Natural killer cell (primary cell): ENCODE measurements at regions of chr19 and their contacts with region 1.

Region 1: GRCh38 chr19:19404879-19405860 is at the start of gene GATAD2A:
- DNase-seq: peak; percentile 96 to 97
- ATAC-seq: peak; percentile 79 to 97 (median 83)
- H3K4me3 ChIP-seq: peak within 1 kb of the TSS; percentile 59
- H3K4me3 Mint-ChIP-seq: peak within 1 kb of the TSS; percentile 94
- H3K27ac ChIP-seq: peak within 1 kb of the TSS; percentile 79
- H3K27ac Mint-ChIP-seq: peak within 1 kb of the TSS; percentile 89 to 90
- H3K4me1 ChIP-seq: peaks cover 59% of the 10 kb centered on the region
- H3K4me1 Mint-ChIP-seq: peaks cover 60 to 61% of the 10 kb centered on the region in 2 donors
- H3K27me3 ChIP-seq: no peaks in the 10 kb centered on the region
- H3K27me3 Mint-ChIP-seq: no peaks in the 10 kb centered on the region
- CTCF ChIP-seq: no peak
- total RNA-seq, gene GATAD2A: 209 to 232 (median 230) TPM

Region 2: GRCh38 chr19:19214892-19215291 is 190.3 kb before region 1 on chr19:
- intact Hi-C with region 1: no loop called
- DNase-seq: peak in 1 of 2 donors; percentile 51
- ATAC-seq: peak in 2 of 3 donors; percentile 53 to 72
- H3K4me3 ChIP-seq: no peak overlapping the region
- H3K4me3 Mint-ChIP-seq: no peak overlapping the region
- H3K27ac ChIP-seq: no peak overlapping the region
- H3K27ac Mint-ChIP-seq: no peak overlapping the region
- H3K4me1 ChIP-seq: no peaks in the 10 kb centered on the region
- H3K4me1 Mint-ChIP-seq: no peaks in the 10 kb centered on the region
- H3K27me3 ChIP-seq: peaks cover 31% of the 10 kb centered on the region
- H3K27me3 Mint-ChIP-seq: peaks cover 27 to 36% of the 10 kb centered on the region in 2 donors
- CTCF ChIP-seq: no peak

Region 3: GRCh38 chr19:19366612-19367396 is 38.4 kb before region 1 on chr19:
- intact Hi-C with region 1: loop called (anchors 2 kb)
- DNase-seq: peak; percentile 58 to 86
- ATAC-seq: peak; percentile 78 to 83 (median 79)
- H3K4me3 ChIP-seq: no peak overlapping the region
- H3K4me3 Mint-ChIP-seq: peak overlapping the region; percentile 62
- H3K27ac ChIP-seq: no peak overlapping the region
- H3K27ac Mint-ChIP-seq: peak overlapping the region; percentile 46 to 59
- H3K4me1 ChIP-seq: peaks cover 29% of the 10 kb centered on the region
- H3K4me1 Mint-ChIP-seq: peaks cover 8 to 17% of the 10 kb centered on the region in 2 donors
- H3K27me3 ChIP-seq: no peaks in the 10 kb centered on the region
- H3K27me3 Mint-ChIP-seq: no peaks in the 10 kb centered on the region
- CTCF ChIP-seq: peak; percentile 95

Region 4: GRCh38 chr19:19385108-19385899 is 19.9 kb before region 1 on chr19:
- intact Hi-C with region 1: loop called (anchors 1 kb)
- DNase-seq: peak; percentile 99
- ATAC-seq: peak; percentile 83 to 94 (median 85)
- H3K4me3 ChIP-seq: peak overlapping the region; percentile 58
- H3K4me3 Mint-ChIP-seq: peak overlapping the region; percentile 89
- H3K27ac ChIP-seq: peak overlapping the region; percentile 90
- H3K27ac Mint-ChIP-seq: peak overlapping the region; percentile 98 to 100
- H3K4me1 ChIP-seq: peaks cover 46% of the 10 kb centered on the region
- H3K4me1 Mint-ChIP-seq: peaks cover 42 to 48% of the 10 kb centered on the region in 2 donors
- H3K27me3 ChIP-seq: no peaks in the 10 kb centered on the region
- H3K27me3 Mint-ChIP-seq: no peaks in the 10 kb centered on the region
- CTCF ChIP-seq: no peak

Region 5: DNA sequence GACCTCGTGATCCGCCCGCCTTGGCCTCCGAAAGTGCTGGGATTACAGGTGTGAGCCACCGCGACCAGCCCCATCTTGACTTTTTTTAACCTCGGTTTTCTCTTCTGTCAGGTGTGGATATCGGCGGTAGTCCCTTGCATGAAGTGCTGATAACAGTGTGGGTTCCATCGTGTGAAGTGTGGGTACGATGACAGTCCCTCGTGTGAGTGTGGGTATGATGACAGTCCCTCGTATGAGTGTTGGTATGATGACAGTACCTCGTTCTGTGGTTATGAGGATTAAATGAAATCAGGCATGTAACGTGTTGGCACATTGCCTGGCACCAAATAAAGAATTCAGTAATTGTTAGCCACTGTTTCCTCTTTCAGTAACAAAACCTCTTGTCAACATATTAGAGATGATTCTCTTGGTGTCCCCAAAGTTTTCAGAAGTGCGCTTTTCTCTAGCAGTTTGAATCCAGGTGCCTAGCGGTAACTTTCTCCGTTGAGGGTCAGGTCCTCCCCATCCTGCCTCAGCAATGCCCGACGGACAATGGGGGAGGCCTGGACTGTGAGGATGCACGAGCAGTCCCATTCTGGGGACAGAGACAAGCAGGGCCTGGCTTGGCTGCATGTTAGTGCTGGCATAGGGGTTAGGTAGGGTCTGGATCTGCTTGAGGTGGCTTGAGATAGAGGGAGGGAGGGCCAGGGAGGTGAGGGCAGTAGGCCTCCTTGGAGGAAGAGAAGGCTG is 15.6 kb after region 1 on chr19:
- intact Hi-C with region 1: loop called (anchors 2 kb)
- DNase-seq: peak; percentile 65 to 85
- ATAC-seq: peak; percentile 86 to 93 (median 91)
- H3K4me3 ChIP-seq: no peak overlapping the region
- H3K4me3 Mint-ChIP-seq: peak overlapping the region; percentile 82
- H3K27ac ChIP-seq: peak overlapping the region; percentile 86
- H3K27ac Mint-ChIP-seq: peak overlapping the region; percentile 88 to 94
- H3K4me1 ChIP-seq: peaks cover 93% of the 10 kb centered on the region
- H3K4me1 Mint-ChIP-seq: peaks cover 58 to 67% of the 10 kb centered on the region in 2 donors
- H3K27me3 ChIP-seq: no peaks in the 10 kb centered on the region
- H3K27me3 Mint-ChIP-seq: no peaks in the 10 kb centered on the region
- CTCF ChIP-seq: no peak

Region 6: GRCh38 chr19:19444681-19445155 is 39.5 kb after region 1 on chr19:
- intact Hi-C with region 1: loop called (anchors 5 kb)
- DNase-seq: peak in 1 of 2 donors; percentile 48
- ATAC-seq: peak; percentile 37 to 63 (median 38)
- H3K4me3 ChIP-seq: no peak overlapping the region
- H3K4me3 Mint-ChIP-seq: peak overlapping the region; percentile 74
- H3K27ac ChIP-seq: peak overlapping the region; percentile 63
- H3K27ac Mint-ChIP-seq: peak overlapping the region; percentile 78 to 83
- H3K4me1 ChIP-seq: peaks cover 63% of the 10 kb centered on the region
- H3K4me1 Mint-ChIP-seq: peaks cover 70 to 73% of the 10 kb centered on the region in 2 donors
- H3K27me3 ChIP-seq: no peaks in the 10 kb centered on the region
- H3K27me3 Mint-ChIP-seq: no peaks in the 10 kb centered on the region
- CTCF ChIP-seq: no peak

Region 7: DNA sequence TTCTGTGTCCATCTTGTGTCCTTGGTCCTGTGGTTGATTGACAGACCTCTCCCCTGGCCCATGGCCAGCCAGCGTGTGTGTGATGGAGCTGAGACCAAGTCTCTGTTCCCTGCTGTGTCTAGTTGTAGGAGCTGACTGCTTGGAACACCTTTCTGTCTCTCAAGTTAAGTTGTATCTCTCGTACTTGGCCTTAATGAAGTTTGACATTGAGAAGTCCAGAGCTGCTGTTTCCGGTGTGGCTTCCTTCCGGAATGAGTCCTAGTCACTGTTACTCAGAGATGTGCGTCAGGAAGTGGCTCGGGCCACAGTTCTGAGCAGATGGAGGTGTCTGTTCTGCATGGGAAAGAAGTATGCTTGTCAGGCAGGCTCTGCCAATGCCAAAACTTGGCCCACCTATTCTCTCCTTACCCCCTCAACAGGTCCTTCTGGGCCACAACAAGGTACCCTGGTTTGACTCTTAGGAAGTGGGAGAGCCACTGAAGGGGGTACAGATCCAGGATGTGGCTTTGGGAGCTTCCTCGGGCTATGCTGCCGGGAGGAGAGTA is 54.6 kb after region 1 on chr19:
- intact Hi-C with region 1: loop called (anchors 5 kb)
- DNase-seq: peak; percentile 68 to 84
- ATAC-seq: peak; percentile 51 to 79 (median 67)
- H3K4me3 ChIP-seq: peak overlapping the region; percentile 25
- H3K4me3 Mint-ChIP-seq: peak overlapping the region; percentile 95
- H3K27ac ChIP-seq: peak overlapping the region; percentile 92
- H3K27ac Mint-ChIP-seq: peak overlapping the region; percentile 97 to 100
- H3K4me1 ChIP-seq: peaks cover 93% of the 10 kb centered on the region
- H3K4me1 Mint-ChIP-seq: peaks cover 78 to 82% of the 10 kb centered on the region in 2 donors
- H3K27me3 ChIP-seq: no peaks in the 10 kb centered on the region
- H3K27me3 Mint-ChIP-seq: no peaks in the 10 kb centered on the region
- CTCF ChIP-seq: no peak

Region 8: DNA sequence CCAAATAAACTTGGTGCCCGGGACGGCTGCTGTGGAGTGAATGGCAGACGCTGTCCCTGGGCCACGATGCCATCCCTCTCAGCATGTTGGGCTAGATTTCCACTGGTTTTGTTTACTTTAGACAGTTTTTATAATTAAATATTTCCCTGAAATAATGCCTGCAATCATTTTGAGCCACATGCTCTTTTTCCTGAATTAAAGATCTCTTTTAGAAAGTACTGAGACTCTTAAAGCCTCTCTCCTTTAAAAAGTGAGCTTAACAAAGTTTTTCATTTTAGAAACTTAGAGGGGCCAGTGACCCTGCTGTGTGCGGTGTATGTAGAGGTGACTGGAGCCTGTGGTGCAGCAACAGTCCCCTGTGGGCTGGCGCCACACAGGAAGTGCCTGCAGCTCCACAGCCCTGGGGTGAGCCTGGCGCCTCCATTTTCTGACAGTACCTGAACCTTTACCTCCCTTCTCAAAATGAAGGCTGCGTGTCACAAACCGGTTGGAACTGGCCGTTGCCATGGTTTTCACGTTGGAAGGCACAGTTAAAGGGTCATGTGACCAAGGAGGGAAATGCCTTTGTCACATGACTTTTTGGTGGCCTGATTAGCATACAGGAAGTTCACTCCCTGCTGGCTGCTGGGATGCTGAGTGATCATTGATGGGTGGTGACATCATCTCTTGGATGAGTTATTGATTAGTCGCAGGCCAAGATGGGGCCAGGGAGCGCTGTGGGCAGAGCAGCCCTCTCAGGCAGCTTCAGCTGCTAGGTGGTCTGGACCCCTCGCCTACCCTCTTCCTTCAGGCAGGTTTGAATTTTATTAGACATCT is 83.9 kb after region 1 on chr19:
- intact Hi-C with region 1: loop called (anchors 1 kb)
- DNase-seq: peak; percentile 85 to 98
- ATAC-seq: peak; percentile 84 to 86 (median 86)
- H3K4me3 ChIP-seq: no peak overlapping the region
- H3K4me3 Mint-ChIP-seq: peak overlapping the region; percentile 85
- H3K27ac ChIP-seq: peak overlapping the region; percentile 94
- H3K27ac Mint-ChIP-seq: peak overlapping the region; percentile 97 to 98
- H3K4me1 ChIP-seq: peaks cover 60% of the 10 kb centered on the region
- H3K4me1 Mint-ChIP-seq: peaks cover 43 to 50% of the 10 kb centered on the region in 2 donors
- H3K27me3 ChIP-seq: no peaks in the 10 kb centered on the region
- H3K27me3 Mint-ChIP-seq: no peaks in the 10 kb centered on the region
- CTCF ChIP-seq: no peak

Region 9: GRCh38 chr19:19502808-19503602 is 97.8 kb after region 1 on chr19:
- intact Hi-C with region 1: no loop called
- DNase-seq: no peak
- ATAC-seq: no peak
- H3K4me3 ChIP-seq: no peak overlapping the region
- H3K4me3 Mint-ChIP-seq: no peak overlapping the region
- H3K27ac ChIP-seq: no peak overlapping the region
- H3K27ac Mint-ChIP-seq: peak overlapping the region; percentile 33 to 61
- H3K4me1 ChIP-seq: no peaks in the 10 kb centered on the region
- H3K4me1 Mint-ChIP-seq: peaks cover 0 to 5% of the 10 kb centered on the region in 2 donors
- H3K27me3 ChIP-seq: no peaks in the 10 kb centered on the region
- H3K27me3 Mint-ChIP-seq: no peaks in the 10 kb centered on the region
- CTCF ChIP-seq: no peak

Region 10: GRCh38 chr19:19531951-19532805 is 127.0 kb after region 1 on chr19:
- intact Hi-C with region 1: no loop called
- DNase-seq: peak; percentile 88 to 92
- ATAC-seq: peak; percentile 83 to 93 (median 86)
- H3K4me3 ChIP-seq: no peak overlapping the region
- H3K4me3 Mint-ChIP-seq: peak overlapping the region; percentile 25
- H3K27ac ChIP-seq: no peak overlapping the region
- H3K27ac Mint-ChIP-seq: peak overlapping the region; percentile 58 to 83
- H3K4me1 ChIP-seq: peaks cover 11% of the 10 kb centered on the region
- H3K4me1 Mint-ChIP-seq: peaks cover 6 to 20% of the 10 kb centered on the region in 2 donors
- H3K27me3 ChIP-seq: no peaks in the 10 kb centered on the region
- H3K27me3 Mint-ChIP-seq: peaks cover 0 to 2% of the 10 kb centered on the region in 2 donors
- CTCF ChIP-seq: peak; percentile 95